ENCODE measurements at regions of chr18 and their contacts with region 1.

Region 1: GRCh38 chr18:5237723-5238370 is 40.8 kb upstream of the AKAIN1 start:
- H3K4me3 ChIP-seq: peak overlapping the region; percentile 60
- H3K27ac ChIP-seq: peak overlapping the region; percentile 98
- H3K4me1 ChIP-seq: peaks cover 8% of the 10 kb centered on the region; the same call in 1 of the 2 replicates
- CTCF ChIP-seq: peak; percentile 81; the same call in 1 of the 2 replicates

Region 2: GRCh38 chr18:5167831-5168230 is 70.0 kb before region 1 on chr18:
- CTCF ChIA-PET with region 1: no interaction called
- POLR2A ChIA-PET with region 1: no interaction called
- H3K4me3 ChIP-seq: no peak overlapping the region
- H3K27ac ChIP-seq: no peak overlapping the region
- H3K4me1 ChIP-seq: no peaks in the 10 kb centered on the region
- CTCF ChIP-seq: no peak

Region 3: GRCh38 chr18:5295981-5296705 is 58.3 kb after region 1 on chr18:
- CTCF ChIA-PET with region 1: no interaction called
- POLR2A ChIA-PET with region 1: interaction called, 39 read pairs
- H3K4me3 ChIP-seq: peak overlapping the region; percentile 75
- H3K27ac ChIP-seq: peak overlapping the region; percentile 98
- H3K4me1 ChIP-seq: no peaks in the 10 kb centered on the region; the same call in 1 of the 2 replicates
- CTCF ChIP-seq: no peak

Measured in HEK293 (cell line).